ENCODE measurements at regions of chr22 and their contacts with region 1.

Region 1: DNA sequence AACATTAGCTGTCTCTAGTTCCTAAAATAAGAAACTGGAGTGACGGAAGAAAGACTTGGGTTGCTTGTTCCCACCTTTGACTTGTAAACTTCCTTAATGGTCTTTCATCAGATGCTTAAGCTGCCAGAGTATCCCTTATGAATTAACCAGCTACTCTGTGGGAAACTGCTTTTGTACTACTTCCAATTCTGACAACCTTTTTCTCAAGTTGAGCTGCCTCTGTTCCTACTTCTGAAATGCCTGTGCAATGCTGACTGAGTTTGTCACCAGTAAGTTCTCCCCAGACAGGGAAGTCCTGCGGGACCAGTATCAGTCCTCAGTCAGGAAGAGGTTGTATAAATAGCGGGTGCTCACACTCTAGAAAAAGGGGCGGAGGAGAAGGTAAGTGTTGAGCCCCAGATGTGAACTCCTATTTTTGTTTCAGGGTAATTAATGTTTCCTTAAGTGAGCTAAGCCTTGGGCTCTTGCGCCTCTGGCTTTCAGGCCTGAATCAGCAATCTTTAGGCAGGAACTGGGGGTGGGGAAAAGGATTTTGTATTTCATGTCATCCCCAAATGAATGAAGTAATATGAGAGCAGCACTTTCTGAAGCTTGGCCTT is 67.2 kb downstream of the CECR2 start:
- DNase-seq: peak in 1 of 10 donors; percentile 13
- H3K4me3 ChIP-seq: peak overlapping the region in 45 of 59 donors; percentile 0 to 53 (median 27)
- H3K27ac ChIP-seq: peak overlapping the region in 58 of 59 donors; percentile 37 to 98 (median 88)
- H3K27me3 ChIP-seq: peaks cover 0 to 5% (median 0%) of the 10 kb centered on the region in 45 donors
- CTCF ChIP-seq: peak in 13 of 56 donors; percentile 5 to 41 (median 17)

Region 2: GRCh38 chr22:17368554-17369438 is 67.7 kb before region 1 on chr22:
- intact Hi-C with region 1: loop called (anchors 2 to 5 kb)
- DNase-seq: peak; percentile 41 to 67 (median 54)
- H3K4me3 ChIP-seq: peak overlapping the region; percentile 34 to 84 (median 68)
- H3K27ac ChIP-seq: peak overlapping the region; percentile 13 to 95 (median 89)
- H3K27me3 ChIP-seq: peaks cover 0 to 66% (median 18%) of the 10 kb centered on the region in 45 donors
- CTCF ChIP-seq: peak in 5 of 56 donors; percentile 5 to 19 (median 7)

Region 3: GRCh38 chr22:17380359-17381087 is 56.0 kb before region 1 on chr22:
- intact Hi-C with region 1: no loop called
- DNase-seq: peak in 1 of 10 donors; percentile 34
- H3K4me3 ChIP-seq: no peak overlapping the region
- H3K27ac ChIP-seq: peak overlapping the region in 4 of 59 donors; percentile 6 to 53 (median 30)
- H3K27me3 ChIP-seq: peaks cover 0 to 6% (median 0%) of the 10 kb centered on the region in 45 donors
- CTCF ChIP-seq: no peak

Region 4: GRCh38 chr22:17471886-17472535 is 35.5 kb after region 1 on chr22:
- intact Hi-C with region 1: loop called in 1 of 2 experiments (anchors 5 kb)
- DNase-seq: no peak
- H3K4me3 ChIP-seq: peak overlapping the region in 7 of 59 donors; percentile 2 to 41 (median 14)
- H3K27ac ChIP-seq: peak overlapping the region in 7 of 59 donors; percentile 3 to 38 (median 11)
- H3K27me3 ChIP-seq: peaks cover 0 to 9% (median 0%) of the 10 kb centered on the region in 45 donors
- CTCF ChIP-seq: no peak

Region 5: GRCh38 chr22:17486313-17486712 is 49.8 kb after region 1 on chr22:
- intact Hi-C with region 1: loop called in 1 of 2 experiments (anchors 5 kb)
- DNase-seq: peak in 6 of 10 donors; percentile 17 to 66 (median 42)
- H3K4me3 ChIP-seq: no peak overlapping the region
- H3K27ac ChIP-seq: peak overlapping the region in 14 of 59 donors; percentile 0 to 69 (median 50)
- H3K27me3 ChIP-seq: no peaks in the 10 kb centered on the region
- CTCF ChIP-seq: peak in 18 of 56 donors; percentile 8 to 56 (median 28)